Activated CD4-positive, alpha-beta T cell treated with anti-CD3 and anti-CD28 coated beads for 36 hours (primary cell): ENCODE measurements at regions of chr3 and their contacts with region 1.

Region 1: GRCh38 chr3:171248425-171249111 is 211.6 kb downstream of the TNIK start:
- DNase-seq: no peak
- ATAC-seq: peak; percentile 75
- H3K4me3 Mint-ChIP-seq: no peak overlapping the region
- H3K27ac Mint-ChIP-seq: no peak overlapping the region
- H3K4me1 Mint-ChIP-seq: peaks cover 43% of the 10 kb centered on the region
- H3K27me3 Mint-ChIP-seq: no peaks in the 10 kb centered on the region

Region 2: GRCh38 chr3:171162986-171163723 is 85.4 kb before region 1 on chr3:
- CTCF ChIA-PET with region 1: interaction called, 5 read pairs
- POLR2A ChIA-PET with region 1: no interaction called
- intact Hi-C with region 1: loop called in 1 of 2 experiments (anchors 2 kb)
- DNase-seq: peak; percentile 25
- ATAC-seq: no peak
- H3K4me3 Mint-ChIP-seq: no peak overlapping the region
- H3K27ac Mint-ChIP-seq: no peak overlapping the region
- H3K4me1 Mint-ChIP-seq: peaks cover 28% of the 10 kb centered on the region
- H3K27me3 Mint-ChIP-seq: no peaks in the 10 kb centered on the region

Region 3: DNA sequence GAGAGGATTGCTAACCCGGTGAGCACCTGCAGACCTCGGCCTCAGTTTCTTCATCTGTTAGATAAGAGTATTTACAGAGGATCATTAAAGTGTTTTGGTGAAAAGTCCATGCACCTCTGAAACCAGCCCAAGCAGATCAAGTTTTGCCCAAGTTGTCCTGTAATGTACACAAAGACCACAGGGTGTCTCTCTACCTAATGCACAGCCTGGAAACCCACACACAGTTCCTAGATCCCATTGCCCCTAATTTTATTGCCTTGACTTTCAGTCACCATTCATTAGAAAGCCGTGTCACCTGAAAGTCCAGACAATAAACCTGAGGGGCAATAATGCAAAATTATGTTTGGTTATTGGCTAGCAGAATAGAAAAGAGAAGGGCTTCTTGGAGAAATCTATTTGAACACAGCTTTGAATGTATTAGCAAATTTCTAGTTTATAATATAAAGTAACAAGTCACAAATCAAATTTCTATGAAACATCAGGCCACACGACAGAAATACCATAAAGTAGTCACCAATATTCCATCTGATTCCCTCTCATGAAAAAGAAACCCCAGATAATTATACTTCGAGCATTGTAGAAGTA is 60.8 kb before region 1 on chr3:
- CTCF ChIA-PET with region 1: interaction called, 3 read pairs
- POLR2A ChIA-PET with region 1: interaction called, 3 read pairs
- intact Hi-C with region 1: loop called (anchors 2 kb)
- DNase-seq: no peak
- ATAC-seq: no peak
- H3K4me3 Mint-ChIP-seq: no peak overlapping the region
- H3K27ac Mint-ChIP-seq: no peak overlapping the region
- H3K4me1 Mint-ChIP-seq: peaks cover 51% of the 10 kb centered on the region
- H3K27me3 Mint-ChIP-seq: no peaks in the 10 kb centered on the region

Region 4: GRCh38 chr3:171225708-171226107 is 22.9 kb before region 1 on chr3:
- CTCF ChIA-PET with region 1: interaction called, 3 read pairs
- POLR2A ChIA-PET with region 1: interaction called, 4 read pairs
- intact Hi-C with region 1: loop called in 1 of 2 experiments (anchors 1 kb)
- DNase-seq: no peak
- ATAC-seq: no peak
- H3K4me3 Mint-ChIP-seq: no peak overlapping the region
- H3K27ac Mint-ChIP-seq: peak overlapping the region; percentile 72
- H3K4me1 Mint-ChIP-seq: peaks cover 46% of the 10 kb centered on the region
- H3K27me3 Mint-ChIP-seq: no peaks in the 10 kb centered on the region

Region 5: GRCh38 chr3:171284308-171285075 is 35.9 kb after region 1 on chr3:
- CTCF ChIA-PET with region 1: interaction called, 4 read pairs
- POLR2A ChIA-PET with region 1: no interaction called
- intact Hi-C with region 1: loop called in 1 of 2 experiments (anchors 5 kb)
- DNase-seq: peak; percentile 27
- ATAC-seq: peak; percentile 62
- H3K4me3 Mint-ChIP-seq: no peak overlapping the region
- H3K27ac Mint-ChIP-seq: peak overlapping the region; percentile 62
- H3K4me1 Mint-ChIP-seq: peaks cover 65% of the 10 kb centered on the region
- H3K27me3 Mint-ChIP-seq: no peaks in the 10 kb centered on the region

Region 6: DNA sequence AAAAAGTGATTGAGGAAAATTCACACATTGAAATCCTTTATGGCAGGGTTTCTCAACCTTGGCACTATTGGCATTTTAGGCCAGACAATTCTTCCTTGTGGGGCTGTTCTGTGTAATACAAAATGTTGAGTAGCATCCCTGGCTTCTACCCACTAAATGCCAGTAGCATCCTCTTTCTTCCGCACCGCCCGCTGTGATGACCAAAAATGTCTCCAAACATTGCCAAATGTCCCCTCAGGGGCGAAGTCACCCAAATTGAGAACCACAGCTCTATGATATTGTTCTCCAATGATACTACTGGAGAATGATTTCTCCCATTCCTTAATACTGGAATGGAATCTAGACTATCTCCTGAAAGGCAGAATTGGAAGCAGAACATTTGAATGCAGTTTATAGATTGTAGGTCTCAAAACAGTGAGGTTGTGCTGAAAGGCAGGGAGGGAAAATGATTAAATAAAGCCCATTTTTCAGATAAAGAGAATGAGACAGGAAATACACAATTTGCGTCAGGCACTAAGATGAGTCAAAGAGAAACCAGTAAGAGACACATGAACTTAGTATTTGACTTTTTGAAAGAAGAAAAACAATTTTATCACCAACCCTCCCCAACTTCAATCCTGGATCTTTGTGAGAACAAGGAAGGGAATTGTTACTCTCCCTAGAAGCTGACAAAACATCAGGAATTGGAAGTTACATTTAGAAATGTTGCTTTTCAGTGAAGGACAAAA is 313.2 kb after region 1 on chr3:
- CTCF ChIA-PET with region 1: no interaction called
- POLR2A ChIA-PET with region 1: no interaction called
- intact Hi-C with region 1: loop called in 1 of 2 experiments (anchors 5 kb)
- DNase-seq: peak; percentile 17
- ATAC-seq: peak; percentile 73
- H3K4me3 Mint-ChIP-seq: peak overlapping the region; percentile 58
- H3K27ac Mint-ChIP-seq: peak overlapping the region; percentile 94
- H3K4me1 Mint-ChIP-seq: peaks cover 36% of the 10 kb centered on the region
- H3K27me3 Mint-ChIP-seq: no peaks in the 10 kb centered on the region